Calu3 (cell line): ENCODE measurements at regions of chr2 and their contacts with region 1.

Region 1: DNA sequence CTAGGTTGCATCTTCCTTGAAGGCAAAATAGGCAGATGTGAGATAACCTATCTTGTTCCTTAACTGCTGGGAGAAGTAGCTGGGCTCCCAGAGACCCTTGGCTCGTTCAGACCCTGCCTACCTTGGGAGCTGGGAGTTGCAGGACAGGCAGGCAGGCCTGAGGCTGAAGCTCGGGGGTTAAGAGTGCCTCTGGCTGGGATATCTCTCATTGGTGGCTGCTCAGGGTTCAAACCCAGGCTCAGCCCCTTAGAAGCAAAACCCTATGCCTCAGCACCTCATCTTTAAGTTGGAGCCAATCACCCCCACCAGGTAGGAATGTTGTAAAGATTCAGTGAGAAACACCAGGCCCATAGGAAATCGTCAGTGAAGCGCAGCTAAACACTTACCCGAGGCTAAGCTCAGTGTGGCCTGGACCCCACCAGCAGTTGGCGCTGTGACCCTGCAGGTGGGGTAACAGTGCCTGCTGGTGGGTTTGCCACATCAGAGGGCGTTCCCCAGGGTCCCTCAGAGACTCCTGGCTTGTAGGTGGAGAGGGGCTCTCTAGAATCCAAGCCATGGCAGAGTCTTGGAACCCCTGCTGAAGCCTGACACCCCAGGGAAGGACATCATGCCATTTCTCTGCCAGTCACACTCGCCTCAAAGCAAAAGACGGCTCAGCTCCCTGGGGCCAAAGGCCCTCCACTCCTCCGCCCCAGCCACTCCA is 54.6 kb upstream of the GPR17 start:
- DNase-seq: peak; percentile 71
- H3K4me3 Mint-ChIP-seq: no peak overlapping the region
- H3K27ac Mint-ChIP-seq: no peak overlapping the region
- H3K4me1 Mint-ChIP-seq: no peaks in the 10 kb centered on the region
- H3K27me3 Mint-ChIP-seq: peaks cover 34% of the 10 kb centered on the region
- CTCF ChIP-seq: peak; percentile 80

Region 2: DNA sequence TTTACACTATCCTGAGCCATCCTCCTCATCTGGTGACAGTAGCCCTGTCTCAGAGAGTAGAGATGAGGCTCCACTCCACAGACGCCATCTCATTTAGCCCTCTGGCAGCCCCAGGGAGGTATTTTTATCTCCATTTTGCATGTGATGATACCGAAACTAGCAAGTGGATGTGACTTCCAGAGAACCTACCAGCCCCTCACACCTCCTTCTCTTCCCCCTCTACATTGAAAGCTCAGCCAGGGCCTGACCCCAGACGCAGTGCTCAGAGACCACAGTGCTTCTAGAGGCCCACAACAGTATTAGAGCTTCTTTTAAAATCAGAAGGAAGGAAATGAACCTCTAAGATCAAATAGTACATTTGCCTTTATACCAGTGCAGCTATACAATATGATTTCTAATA is 927.1 kb before region 1 on chr2:
- CTCF ChIA-PET with region 1: no interaction called
- intact Hi-C with region 1: no loop called
- DNase-seq: no peak
- H3K4me3 Mint-ChIP-seq: no peak overlapping the region
- H3K27ac Mint-ChIP-seq: no peak overlapping the region
- H3K4me1 Mint-ChIP-seq: no peaks in the 10 kb centered on the region
- H3K27me3 Mint-ChIP-seq: peaks cover 9% of the 10 kb centered on the region
- CTCF ChIP-seq: no peak

Region 3: DNA sequence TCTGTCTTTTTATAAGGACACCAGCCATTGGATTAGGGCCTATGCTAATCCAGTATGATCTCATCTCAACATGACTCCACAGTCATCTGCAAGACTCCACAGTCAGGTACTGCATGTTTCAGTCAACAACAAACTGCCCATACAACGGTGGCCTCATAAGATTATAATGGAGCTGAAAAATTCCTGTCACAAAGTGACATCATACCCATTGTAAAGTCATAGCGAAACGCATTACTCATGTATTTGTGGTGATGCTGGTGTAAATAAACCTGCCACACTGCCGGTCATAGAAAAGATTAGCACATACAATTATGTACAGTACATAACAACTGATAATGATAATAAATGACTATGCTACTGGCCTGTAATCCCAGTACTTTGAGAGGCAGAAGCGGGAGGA is 590.4 kb before region 1 on chr2:
- CTCF ChIA-PET with region 1: no interaction called
- intact Hi-C with region 1: no loop called
- DNase-seq: no peak
- H3K4me3 Mint-ChIP-seq: no peak overlapping the region
- H3K27ac Mint-ChIP-seq: no peak overlapping the region
- H3K4me1 Mint-ChIP-seq: no peaks in the 10 kb centered on the region
- H3K27me3 Mint-ChIP-seq: peaks cover 13% of the 10 kb centered on the region
- CTCF ChIP-seq: no peak

Region 4: GRCh38 chr2:127649684-127650040 is 58.3 kb after region 1 on chr2:
- CTCF ChIA-PET with region 1: interaction called, 17 read pairs
- intact Hi-C with region 1: loop called (anchors 1 kb)
- DNase-seq: peak; percentile 92
- H3K4me3 Mint-ChIP-seq: no peak overlapping the region
- H3K27ac Mint-ChIP-seq: no peak overlapping the region
- H3K4me1 Mint-ChIP-seq: no peaks in the 10 kb centered on the region
- H3K27me3 Mint-ChIP-seq: peaks cover 39% of the 10 kb centered on the region
- CTCF ChIP-seq: peak; percentile 80

Region 5: DNA sequence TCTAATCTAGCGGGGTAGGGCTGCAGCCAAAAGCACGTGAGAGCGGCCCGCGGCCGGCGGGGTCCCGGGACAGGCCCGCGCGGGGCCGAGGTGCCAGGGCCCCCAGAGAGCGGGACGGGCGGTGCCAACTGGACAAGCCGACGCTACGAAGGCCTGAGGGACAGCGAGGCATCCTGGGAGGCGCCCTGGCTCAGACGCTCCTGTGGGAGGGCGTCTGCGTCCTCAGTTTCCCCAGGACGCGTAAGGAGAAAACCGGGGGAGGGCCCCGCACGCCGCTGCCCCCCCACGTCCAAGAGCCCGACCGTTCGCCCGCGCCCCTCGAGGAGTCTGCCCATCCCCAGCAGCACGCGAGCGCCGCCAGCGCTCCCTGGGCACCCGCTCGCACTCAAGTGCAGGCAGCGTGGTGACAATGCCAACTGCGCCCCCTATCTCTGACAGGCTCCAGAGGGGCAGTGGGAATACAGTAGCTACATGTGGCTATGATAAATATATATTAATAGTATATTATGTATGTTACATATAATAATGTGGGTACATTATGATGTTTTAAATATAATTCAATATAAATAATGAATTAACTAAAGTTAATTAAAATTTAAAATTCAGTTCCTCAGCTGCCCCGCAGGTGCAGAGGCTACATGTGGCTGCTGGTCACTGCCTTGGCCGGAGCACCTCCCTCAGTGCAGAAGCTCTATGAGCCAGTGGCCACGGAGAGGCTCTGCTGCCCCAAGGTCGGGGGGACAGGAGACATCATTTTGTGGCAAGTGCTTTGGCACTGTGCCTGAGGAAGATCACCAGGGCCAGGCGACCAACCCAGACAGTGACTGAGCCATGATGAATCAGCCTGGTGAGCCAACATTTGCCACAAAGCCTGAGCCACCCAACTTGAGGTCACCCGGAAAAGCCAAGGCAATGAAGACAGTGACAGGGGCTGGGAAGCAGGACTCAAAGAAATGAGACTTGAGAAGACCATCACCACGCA is 104.4 kb after region 1 on chr2:
- CTCF ChIA-PET with region 1: interaction called, 20 read pairs
- intact Hi-C with region 1: loop called (anchors 5 kb)
- DNase-seq: peak; percentile 90
- H3K4me3 Mint-ChIP-seq: peak overlapping the region; percentile 56
- H3K27ac Mint-ChIP-seq: no peak overlapping the region
- H3K4me1 Mint-ChIP-seq: peaks cover 10% of the 10 kb centered on the region
- H3K27me3 Mint-ChIP-seq: no peaks in the 10 kb centered on the region
- CTCF ChIP-seq: peak; percentile 86